ENCODE measurements at regions of chr12 and their contacts with region 1.

Region 1: GRCh38 chr12:50222275-50222795 is 55.2 kb upstream of the CERS5 start:
- DNase-seq: peak; percentile 89
- H3K4me3 ChIP-seq: peak overlapping the region; percentile 93
- H3K27ac ChIP-seq: peak overlapping the region; percentile 97
- H3K27me3 ChIP-seq: no peaks in the 10 kb centered on the region
- CTCF ChIP-seq: peak; percentile 58

Region 2: DNA sequence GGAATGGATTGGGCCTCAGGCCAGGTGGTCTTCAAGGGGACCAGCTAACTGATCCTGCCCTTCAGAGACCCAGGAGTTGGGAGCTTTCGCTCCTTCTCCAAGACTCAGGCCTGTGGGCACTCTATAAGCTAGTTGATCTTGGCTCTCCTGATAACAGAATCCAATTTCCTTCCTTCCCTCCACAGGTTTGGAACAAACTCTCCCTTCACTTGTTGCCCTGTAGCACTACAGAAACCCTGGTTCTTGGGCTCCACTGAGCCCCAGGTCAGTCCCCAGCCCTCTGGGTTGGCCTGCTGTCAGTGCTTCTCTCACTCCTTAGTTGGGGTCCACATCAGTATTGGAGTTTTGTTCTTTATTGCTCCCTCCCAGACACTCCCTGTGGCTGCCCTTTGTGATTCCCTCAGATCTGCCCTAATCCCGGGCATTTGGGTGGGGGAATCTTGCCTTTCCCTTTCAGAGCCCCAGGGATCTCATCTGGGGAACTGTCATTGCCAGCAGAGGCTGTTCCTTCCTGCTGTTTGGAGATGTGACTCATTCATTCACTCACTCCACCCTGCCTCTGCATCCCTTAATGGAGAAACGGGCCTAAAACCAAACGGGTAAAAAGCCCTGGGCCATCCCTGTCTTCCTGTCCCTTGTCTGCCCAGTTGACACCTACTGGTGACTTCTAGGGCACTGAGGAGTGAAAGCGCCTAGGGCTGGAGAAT is 122.9 kb before region 1 on chr12:
- CTCF ChIA-PET with region 1: no interaction called
- POLR2A ChIA-PET with region 1: no interaction called
- DNase-seq: no peak
- H3K4me3 ChIP-seq: no peak overlapping the region
- H3K27ac ChIP-seq: no peak overlapping the region
- H3K27me3 ChIP-seq: no peaks in the 10 kb centered on the region
- CTCF ChIP-seq: no peak

Region 3: GRCh38 chr12:50205648-50206047 is 16.7 kb before region 1 on chr12:
- CTCF ChIA-PET with region 1: interaction called, 4 read pairs
- POLR2A ChIA-PET with region 1: interaction called, 11 read pairs
- DNase-seq: no peak
- H3K4me3 ChIP-seq: no peak overlapping the region
- H3K27ac ChIP-seq: no peak overlapping the region
- H3K27me3 ChIP-seq: no peaks in the 10 kb centered on the region
- CTCF ChIP-seq: no peak

Region 4: GRCh38 chr12:50246873-50247612 is 24.7 kb after region 1 on chr12:
- CTCF ChIA-PET with region 1: interaction called, 3 read pairs
- POLR2A ChIA-PET with region 1: interaction called, 48 read pairs
- DNase-seq: peak; percentile 87
- H3K4me3 ChIP-seq: no peak overlapping the region
- H3K27ac ChIP-seq: peak overlapping the region; percentile 90
- H3K27me3 ChIP-seq: no peaks in the 10 kb centered on the region
- CTCF ChIP-seq: no peak

Region 5: GRCh38 chr12:50351120-50352043 is 129.0 kb after region 1 on chr12:
- CTCF ChIA-PET with region 1: no interaction called
- POLR2A ChIA-PET with region 1: no interaction called
- DNase-seq: no peak
- H3K4me3 ChIP-seq: no peak overlapping the region
- H3K27ac ChIP-seq: no peak overlapping the region
- H3K27me3 ChIP-seq: no peaks in the 10 kb centered on the region
- CTCF ChIP-seq: no peak

Region 6: GRCh38 chr12:50400598-50401364 is 178.4 kb after region 1 on chr12 and contains the start of gene LARP4:
- CTCF ChIA-PET with region 1: no interaction called
- POLR2A ChIA-PET with region 1: no interaction called
- DNase-seq: peak; percentile 74
- H3K4me3 ChIP-seq: peak within 1 kb of the TSS; percentile 91
- H3K27ac ChIP-seq: peak within 1 kb of the TSS; percentile 85
- H3K27me3 ChIP-seq: no peaks in the 10 kb centered on the region
- CTCF ChIP-seq: no peak
- polyA plus RNA-seq, gene LARP4: 19.6 and 25.5 TPM in 2 replicates